ENCODE measurements at regions of chr13 and their contacts with region 1.

Region 1: GRCh38 chr13:40644838-40645604 is 21.4 kb downstream of the FOXO1 start:
- DNase-seq: no peak
- H3K4me3 Mint-ChIP-seq: no peak overlapping the region
- H3K27ac Mint-ChIP-seq: peak overlapping the region; percentile 66
- H3K4me1 Mint-ChIP-seq: peaks cover 84% of the 10 kb centered on the region
- H3K27me3 Mint-ChIP-seq: no peaks in the 10 kb centered on the region

Region 2: GRCh38 chr13:40600149-40600751 is 44.8 kb before region 1 on chr13:
- intact Hi-C with region 1: no loop called
- DNase-seq: no peak
- H3K4me3 Mint-ChIP-seq: peak overlapping the region; percentile 25
- H3K27ac Mint-ChIP-seq: peak overlapping the region; percentile 75
- H3K4me1 Mint-ChIP-seq: peaks cover 79% of the 10 kb centered on the region
- H3K27me3 Mint-ChIP-seq: no peaks in the 10 kb centered on the region

Region 3: DNA sequence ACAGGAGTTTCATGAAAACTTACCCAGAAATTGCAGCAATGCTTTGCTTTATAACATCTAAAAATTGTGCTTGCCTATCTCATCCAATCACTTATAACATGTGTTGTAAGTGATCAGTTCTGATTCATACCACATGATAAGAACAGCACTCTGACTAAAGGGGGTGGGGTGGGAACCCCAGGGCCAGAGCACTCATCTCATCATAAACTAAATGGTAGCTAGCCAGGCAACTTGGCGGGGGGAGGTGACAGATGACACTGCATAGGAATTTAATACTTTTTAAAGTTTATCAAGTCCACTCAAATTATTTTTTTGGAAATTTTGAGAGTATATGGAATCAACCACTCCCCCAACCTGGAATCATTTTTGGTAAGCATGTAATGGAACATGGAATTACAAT is 20.6 kb before region 1 on chr13:
- intact Hi-C with region 1: loop called (anchors 2 kb)
- DNase-seq: no peak
- H3K4me3 Mint-ChIP-seq: no peak overlapping the region
- H3K27ac Mint-ChIP-seq: no peak overlapping the region
- H3K4me1 Mint-ChIP-seq: peaks cover 74% of the 10 kb centered on the region
- H3K27me3 Mint-ChIP-seq: no peaks in the 10 kb centered on the region

Region 4: GRCh38 chr13:40874138-40874779 is 229.2 kb after region 1 on chr13:
- intact Hi-C with region 1: no loop called
- DNase-seq: no peak
- H3K4me3 Mint-ChIP-seq: no peak overlapping the region
- H3K27ac Mint-ChIP-seq: no peak overlapping the region
- H3K4me1 Mint-ChIP-seq: no peaks in the 10 kb centered on the region
- H3K27me3 Mint-ChIP-seq: no peaks in the 10 kb centered on the region

Measured in activated T-helper 1 cell treated with anti-CD3 and anti-CD28 coated beads, Interleukin-12 subunit alpha, Interleukin-12 subunit beta, Interleukin-2, Interleukin-4 antibody, amounts not matched to agents 30 ng/mL and 10 ng/mL and 1 ng/mL, durations not matched to agents 14 hours and 24 hours and 36 hours (primary cell).